ENCODE measurements at regions of chr20 and their contacts with region 1.

Region 1: DNA sequence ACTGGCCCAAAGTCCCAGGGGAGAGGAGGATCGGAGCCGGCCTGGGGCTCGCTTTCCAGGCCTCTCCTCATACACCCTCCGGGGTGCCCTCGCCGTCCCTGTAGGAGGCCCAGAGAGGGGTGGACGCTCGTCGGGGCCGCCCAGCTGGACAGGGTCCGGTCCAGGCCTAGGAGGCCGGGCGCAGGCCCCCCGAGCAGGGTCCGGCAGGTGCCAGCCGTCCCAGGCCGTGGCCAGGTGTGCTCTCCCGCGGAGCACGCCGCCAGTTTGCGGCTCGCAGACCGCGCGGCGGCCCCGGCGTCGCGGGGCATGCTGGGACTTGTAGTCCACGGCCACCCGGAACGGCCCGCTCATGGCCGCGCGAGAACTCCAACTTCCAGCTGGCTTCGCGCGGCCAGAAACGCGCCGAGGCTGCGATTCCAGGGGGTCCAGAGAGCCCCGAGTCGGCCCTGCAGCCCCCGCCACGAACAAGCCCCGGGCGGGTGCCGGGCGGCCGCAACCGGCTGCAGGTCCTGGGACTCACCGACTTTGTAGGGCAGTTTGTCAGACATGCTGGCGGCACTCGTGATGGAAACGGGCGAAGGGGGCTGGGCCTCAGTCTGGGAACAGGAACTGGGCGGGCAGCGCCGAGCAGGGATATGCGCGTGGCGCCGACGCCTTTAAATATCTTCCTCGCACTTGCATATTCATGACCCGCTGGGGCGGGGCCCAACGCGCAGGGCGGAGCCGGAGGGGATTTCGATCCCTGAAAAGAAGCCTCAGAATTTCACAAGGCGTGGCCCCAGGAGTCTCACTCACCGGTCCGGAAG is at the start of gene AHCY:
- DNase-seq: peak; percentile 92 to 94 (median 93)
- H3K4me3 ChIP-seq: peak within 1 kb of the TSS; percentile 67 to 89 (median 72)
- H3K4me3 Mint-ChIP-seq: peak within 1 kb of the TSS; percentile 82 to 91
- H3K27ac ChIP-seq: peak within 1 kb of the TSS; percentile 45 to 92
- H3K27ac Mint-ChIP-seq: peak within 1 kb of the TSS; percentile 90 to 95 (median 92)
- H3K4me1 ChIP-seq: peaks cover 48 to 51% of the 10 kb centered on the region in 2 donors
- H3K4me1 Mint-ChIP-seq: peaks cover 32% of the 10 kb centered on the region
- H3K27me3 ChIP-seq: no peaks in the 10 kb centered on the region
- H3K27me3 Mint-ChIP-seq: peaks cover 0 to 2% (median 0%) of the 10 kb centered on the region in 3 donors
- CTCF ChIP-seq: peak; percentile 6
- polyA plus RNA-seq, gene AHCY: 35.7 to 42.7 (median 41.1) TPM

Region 2: GRCh38 chr20:34111702-34112599 is 191.0 kb before region 1 on chr20 and contains the start of gene EIF2S2:
- intact Hi-C with region 1: loop called in 1 of 2 experiments (anchors 5 kb)
- DNase-seq: peak; percentile 99 to 100 (median 100)
- H3K4me3 ChIP-seq: peak within 1 kb of the TSS; percentile 88 to 99 (median 93)
- H3K4me3 Mint-ChIP-seq: peak within 1 kb of the TSS; percentile 93 to 97
- H3K27ac ChIP-seq: peak within 1 kb of the TSS; percentile 94
- H3K27ac Mint-ChIP-seq: peak within 1 kb of the TSS; percentile 91 to 97 (median 95)
- H3K4me1 ChIP-seq: peaks cover 19 to 39% of the 10 kb centered on the region in 2 donors
- H3K4me1 Mint-ChIP-seq: peaks cover 37% of the 10 kb centered on the region
- H3K27me3 ChIP-seq: no peaks in the 10 kb centered on the region
- H3K27me3 Mint-ChIP-seq: no peaks in the 10 kb centered on the region
- CTCF ChIP-seq: no peak
- polyA plus RNA-seq, gene EIF2S2: 18.8 to 20.1 (median 18.9) TPM

Region 3: GRCh38 chr20:34363062-34363464 is 60.1 kb after region 1 on chr20 and contains the start of gene ITCH:
- intact Hi-C with region 1: loop called (anchors 2 to 5 kb)
- DNase-seq: peak; percentile 89 to 97 (median 91)
- H3K4me3 ChIP-seq: peak within 1 kb of the TSS; percentile 80 to 95 (median 91)
- H3K4me3 Mint-ChIP-seq: peak within 1 kb of the TSS; percentile 94 to 99
- H3K27ac ChIP-seq: peak within 1 kb of the TSS; percentile 79 to 92
- H3K27ac Mint-ChIP-seq: peak within 1 kb of the TSS; percentile 96 to 99 (median 99)
- H3K4me1 ChIP-seq: peaks cover 32 to 36% of the 10 kb centered on the region in 2 donors
- H3K4me1 Mint-ChIP-seq: peaks cover 40% of the 10 kb centered on the region
- H3K27me3 ChIP-seq: no peaks in the 10 kb centered on the region
- H3K27me3 Mint-ChIP-seq: peaks cover 0 to 3% (median 0%) of the 10 kb centered on the region in 3 donors
- CTCF ChIP-seq: no peak
- polyA plus RNA-seq, gene ITCH: 13.3 to 26.6 (median 19.9) TPM

Region 4: GRCh38 chr20:34522969-34523871 is 220.3 kb after region 1 on chr20:
- intact Hi-C with region 1: loop called in 1 of 2 experiments (anchors 5 kb)
- DNase-seq: peak in 1 of 3 donors; percentile 16
- H3K4me3 ChIP-seq: no peak overlapping the region
- H3K4me3 Mint-ChIP-seq: peak overlapping the region in 1 of 2 donors; percentile 51
- H3K27ac ChIP-seq: peak overlapping the region in 1 of 2 donors; percentile 20
- H3K27ac Mint-ChIP-seq: peak overlapping the region in 5 of 7 donors; percentile 2 to 67 (median 46)
- H3K4me1 ChIP-seq: no peaks in the 10 kb centered on the region
- H3K4me1 Mint-ChIP-seq: peaks cover 9% of the 10 kb centered on the region
- H3K27me3 ChIP-seq: no peaks in the 10 kb centered on the region
- H3K27me3 Mint-ChIP-seq: peaks cover 0 to 2% (median 0%) of the 10 kb centered on the region in 3 donors
- CTCF ChIP-seq: peak; percentile 29